Caco-2 (cell line): ENCODE measurements at regions of chr11 and their contacts with region 1.

Region 1: DNA sequence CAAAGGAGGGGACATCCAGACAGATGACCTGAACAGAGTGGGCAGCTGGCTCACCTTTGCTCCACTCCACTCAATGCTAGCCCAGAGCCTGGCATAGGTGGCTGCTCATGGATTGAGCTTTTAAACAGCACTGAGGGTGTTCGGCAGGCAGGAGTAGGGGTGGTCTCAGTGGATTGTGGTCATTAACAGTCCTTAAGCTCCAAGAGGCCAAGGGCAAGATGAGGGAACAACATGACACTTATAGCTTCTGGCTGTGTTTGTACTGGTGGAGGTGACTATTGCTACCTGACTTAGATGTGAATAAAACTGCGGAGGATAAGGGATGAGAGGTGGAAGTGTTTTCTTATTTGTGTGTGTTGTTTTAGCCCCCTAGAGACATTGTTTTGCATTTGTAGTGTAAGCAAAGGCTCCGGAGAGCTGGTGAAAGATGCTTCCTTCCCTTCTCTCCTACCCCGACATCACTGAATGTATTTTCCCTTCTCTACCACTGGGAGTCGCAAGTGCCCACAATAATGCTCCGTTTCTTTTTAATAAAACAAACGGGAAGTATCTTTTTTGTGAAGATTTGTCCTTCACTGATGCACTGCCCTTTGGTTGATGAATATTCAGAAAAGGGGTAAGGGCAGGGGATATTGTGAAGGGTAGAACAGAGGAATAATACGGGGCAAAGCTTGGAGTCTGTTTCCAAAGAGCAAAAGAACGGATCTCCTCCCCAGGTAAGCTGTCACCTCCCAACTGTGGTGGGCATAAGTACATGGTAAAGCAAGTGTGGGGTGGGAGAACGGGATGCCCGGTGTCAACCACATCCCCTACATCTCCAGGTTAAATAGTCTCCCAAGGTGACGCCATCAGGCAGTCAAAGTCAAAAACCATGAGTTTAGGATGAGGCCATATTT is 27.5 kb upstream of the MTNR1B start:
- DNase-seq: no peak
- H3K4me3 ChIP-seq: no peak overlapping the region
- H3K4me3 Mint-ChIP-seq: no peak overlapping the region
- H3K27ac Mint-ChIP-seq: no peak overlapping the region
- H3K4me1 ChIP-seq: no peaks in the 10 kb centered on the region
- H3K4me1 Mint-ChIP-seq: no peaks in the 10 kb centered on the region
- H3K27me3 ChIP-seq: no peaks in the 10 kb centered on the region
- H3K27me3 Mint-ChIP-seq: no peaks in the 10 kb centered on the region
- CTCF ChIP-seq: peak; percentile 44 to 72

Region 2: GRCh38 chr11:92511522-92512203 is 430.3 kb before region 1 on chr11:
- CTCF ChIA-PET with region 1: no interaction called
- POLR2A ChIA-PET with region 1: no interaction called
- intact Hi-C with region 1: no loop called
- DNase-seq: no peak
- H3K4me3 ChIP-seq: no peak overlapping the region
- H3K4me3 Mint-ChIP-seq: no peak overlapping the region
- H3K27ac Mint-ChIP-seq: no peak overlapping the region
- H3K4me1 ChIP-seq: no peaks in the 10 kb centered on the region
- H3K4me1 Mint-ChIP-seq: no peaks in the 10 kb centered on the region
- H3K27me3 ChIP-seq: no peaks in the 10 kb centered on the region
- H3K27me3 Mint-ChIP-seq: peaks cover 4% of the 10 kb centered on the region
- CTCF ChIP-seq: no peak

Region 3: DNA sequence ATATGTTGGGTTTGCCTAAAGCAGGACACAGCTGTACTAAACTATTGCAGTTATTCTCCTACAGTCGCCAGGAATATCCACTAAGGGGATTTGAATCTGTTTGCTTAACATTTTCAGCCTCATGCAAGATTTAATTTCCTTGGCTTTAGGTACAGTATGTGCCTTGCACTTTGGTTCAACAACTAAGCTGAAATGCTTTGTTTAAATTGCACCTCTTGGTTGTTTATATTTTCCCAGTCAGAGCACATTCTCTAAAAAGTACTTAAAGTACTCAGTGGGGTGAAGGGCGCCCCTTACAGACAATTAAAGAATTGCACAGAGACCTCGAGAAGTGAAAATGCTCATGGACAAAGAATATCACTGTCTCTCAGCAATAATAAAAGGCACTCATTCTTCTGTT is 80.3 kb before region 1 on chr11:
- CTCF ChIA-PET with region 1: no interaction called
- POLR2A ChIA-PET with region 1: no interaction called
- intact Hi-C with region 1: no loop called
- DNase-seq: no peak
- H3K4me3 ChIP-seq: no peak overlapping the region
- H3K4me3 Mint-ChIP-seq: no peak overlapping the region
- H3K27ac Mint-ChIP-seq: no peak overlapping the region
- H3K4me1 ChIP-seq: no peaks in the 10 kb centered on the region
- H3K4me1 Mint-ChIP-seq: no peaks in the 10 kb centered on the region
- H3K27me3 ChIP-seq: no peaks in the 10 kb centered on the region; the same call in none of the 2 replicates
- H3K27me3 Mint-ChIP-seq: peaks cover 11% of the 10 kb centered on the region
- CTCF ChIP-seq: no peak

Region 4: GRCh38 chr11:93063100-93063499 is 121.2 kb after region 1 on chr11:
- CTCF ChIA-PET with region 1: interaction called, 3 read pairs
- POLR2A ChIA-PET with region 1: no interaction called
- intact Hi-C with region 1: loop called (anchors 1 kb)
- DNase-seq: no peak
- H3K4me3 ChIP-seq: no peak overlapping the region
- H3K4me3 Mint-ChIP-seq: no peak overlapping the region
- H3K27ac Mint-ChIP-seq: no peak overlapping the region
- H3K4me1 ChIP-seq: no peaks in the 10 kb centered on the region
- H3K4me1 Mint-ChIP-seq: no peaks in the 10 kb centered on the region
- H3K27me3 ChIP-seq: no peaks in the 10 kb centered on the region; the same call in 1 of the 2 replicates
- H3K27me3 Mint-ChIP-seq: peaks cover 2% of the 10 kb centered on the region
- CTCF ChIP-seq: no peak

Region 5: DNA sequence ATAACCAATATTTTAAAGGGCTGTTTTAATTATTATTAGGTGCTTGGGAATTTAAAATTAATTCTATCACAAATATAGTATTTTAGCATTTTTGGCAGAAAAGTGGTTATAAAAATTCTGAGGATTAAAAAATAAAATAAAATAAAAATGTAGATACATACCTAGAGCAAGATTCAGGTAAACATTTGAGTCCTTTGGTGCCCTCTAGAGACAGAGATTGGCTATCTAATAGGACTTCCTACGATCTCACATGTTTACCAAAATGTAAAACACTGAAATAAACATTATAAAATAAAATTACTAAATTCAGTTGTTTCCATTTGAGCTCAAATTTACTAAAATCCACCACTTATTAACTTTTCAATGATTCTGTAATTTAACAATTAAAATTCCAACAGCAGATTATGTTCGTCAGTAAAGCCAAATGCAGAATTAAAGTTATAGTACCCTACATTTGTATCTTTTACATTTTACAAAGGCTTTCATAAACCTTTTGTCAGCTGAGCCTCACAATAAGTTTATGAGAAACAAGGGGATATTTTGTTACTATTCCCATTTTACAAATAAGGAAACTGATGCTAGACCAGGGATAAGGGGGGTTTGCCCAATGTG is 228.1 kb after region 1 on chr11:
- CTCF ChIA-PET with region 1: no interaction called
- POLR2A ChIA-PET with region 1: no interaction called
- intact Hi-C with region 1: loop called (anchors 2 kb)
- DNase-seq: peak in 1 of 2 experiments; percentile 36
- H3K4me3 ChIP-seq: no peak overlapping the region
- H3K4me3 Mint-ChIP-seq: no peak overlapping the region
- H3K27ac Mint-ChIP-seq: no peak overlapping the region
- H3K4me1 ChIP-seq: no peaks in the 10 kb centered on the region
- H3K4me1 Mint-ChIP-seq: no peaks in the 10 kb centered on the region
- H3K27me3 ChIP-seq: no peaks in the 10 kb centered on the region
- H3K27me3 Mint-ChIP-seq: no peaks in the 10 kb centered on the region
- CTCF ChIP-seq: peak; percentile 52 to 72

Region 6: DNA sequence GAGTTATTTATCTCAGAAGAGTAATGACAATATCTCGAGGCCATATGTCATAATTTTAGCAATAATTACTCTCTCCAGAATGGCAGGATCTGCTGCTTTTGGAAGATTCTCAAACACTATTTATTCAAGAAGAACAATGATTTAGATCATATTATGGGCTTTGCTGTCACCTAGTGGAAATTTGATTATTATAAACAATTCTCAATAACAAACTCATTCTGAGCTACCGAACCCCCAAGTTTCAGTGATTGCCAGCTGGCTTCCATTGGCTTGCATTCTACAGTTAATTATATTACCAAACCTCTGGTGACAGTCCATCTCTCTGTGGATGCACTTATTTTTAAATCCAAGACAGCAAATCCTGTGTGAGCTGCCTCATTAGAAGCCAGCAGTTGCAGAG is 283.7 kb after region 1 on chr11:
- CTCF ChIA-PET with region 1: interaction called, 3 read pairs
- POLR2A ChIA-PET with region 1: no interaction called
- intact Hi-C with region 1: loop called (anchors 5 kb)
- DNase-seq: no peak
- H3K4me3 ChIP-seq: no peak overlapping the region
- H3K4me3 Mint-ChIP-seq: no peak overlapping the region
- H3K27ac Mint-ChIP-seq: no peak overlapping the region
- H3K4me1 ChIP-seq: peaks cover 5% of the 10 kb centered on the region; the same call in 1 of the 2 replicates
- H3K4me1 Mint-ChIP-seq: peaks cover 11% of the 10 kb centered on the region
- H3K27me3 ChIP-seq: 0 out of 2 replicates have a peak, but pooled peaks cover 1% of the 10 kb centered on the region
- H3K27me3 Mint-ChIP-seq: peaks cover 10% of the 10 kb centered on the region
- CTCF ChIP-seq: peak in 1 of 2 experiments; percentile 38